ENCODE measurements at regions of chr3 and their contacts with region 1.

Region 1: DNA sequence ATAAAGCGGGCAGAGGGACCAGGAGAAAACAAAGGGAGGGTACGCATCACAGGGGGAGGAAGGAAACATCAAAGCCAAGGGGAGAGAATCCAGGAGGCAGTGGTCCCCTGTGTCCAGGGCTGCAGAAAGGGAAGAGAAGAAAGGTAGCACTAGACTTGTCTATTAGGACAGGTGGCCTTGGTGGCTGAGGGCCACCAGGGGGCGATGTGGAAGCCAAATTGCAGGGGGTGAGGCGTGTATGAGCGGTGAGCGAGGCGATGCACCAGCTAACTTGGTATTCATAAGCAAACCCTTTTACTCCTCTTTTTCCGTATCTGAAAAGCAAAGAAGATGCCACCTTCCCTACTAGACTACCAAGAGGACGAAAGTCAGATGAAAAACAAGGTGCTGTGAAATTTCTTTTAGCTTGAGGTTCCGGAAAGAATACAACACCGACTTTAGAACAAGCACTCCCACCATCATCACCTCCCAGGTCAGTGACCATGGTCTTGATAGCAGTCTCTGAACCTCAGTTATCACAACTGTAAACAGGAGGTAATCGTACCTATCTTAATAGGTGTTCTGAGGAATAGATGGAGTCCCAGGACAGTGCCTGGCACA is 654.4 kb upstream of the ADAMTS9 start:
- DNase-seq: peak; percentile 73
- H3K4me3 Mint-ChIP-seq: no peak overlapping the region
- H3K27ac Mint-ChIP-seq: no peak overlapping the region
- H3K4me1 Mint-ChIP-seq: no peaks in the 10 kb centered on the region
- H3K27me3 Mint-ChIP-seq: peaks cover 13% of the 10 kb centered on the region
- CTCF ChIP-seq: peak; percentile 68

Region 2: GRCh38 chr3:65331720-65332119 is 10.5 kb before region 1 on chr3:
- CTCF ChIA-PET with region 1: interaction called, 14 read pairs
- POLR2A ChIA-PET with region 1: no interaction called
- intact Hi-C with region 1: no loop called
- DNase-seq: no peak
- H3K4me3 Mint-ChIP-seq: no peak overlapping the region
- H3K27ac Mint-ChIP-seq: no peak overlapping the region
- H3K4me1 Mint-ChIP-seq: no peaks in the 10 kb centered on the region
- H3K27me3 Mint-ChIP-seq: peaks cover 57% of the 10 kb centered on the region
- CTCF ChIP-seq: no peak

Region 3: DNA sequence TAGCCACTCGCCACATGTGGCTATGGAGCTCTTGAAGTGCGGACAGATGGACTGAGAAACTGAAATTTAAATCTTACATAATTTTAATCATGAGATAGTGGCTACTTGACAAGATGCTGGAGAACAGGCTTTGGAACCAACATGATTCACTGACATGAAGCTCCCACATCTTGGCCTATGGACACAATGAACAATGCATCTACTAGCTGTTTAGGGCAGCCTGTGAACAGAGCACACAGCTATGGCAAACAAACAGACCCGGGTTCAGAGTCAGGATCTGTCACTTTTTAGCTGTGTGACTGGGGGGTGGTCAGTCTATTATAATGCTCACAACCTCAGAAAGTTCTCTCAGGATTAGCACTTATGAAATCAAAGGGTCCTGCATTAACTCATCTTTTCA is 80.0 kb after region 1 on chr3:
- CTCF ChIA-PET with region 1: no interaction called
- POLR2A ChIA-PET with region 1: no interaction called
- intact Hi-C with region 1: no loop called
- DNase-seq: no peak
- H3K4me3 Mint-ChIP-seq: no peak overlapping the region
- H3K27ac Mint-ChIP-seq: no peak overlapping the region
- H3K4me1 Mint-ChIP-seq: no peaks in the 10 kb centered on the region
- H3K27me3 Mint-ChIP-seq: no peaks in the 10 kb centered on the region
- CTCF ChIP-seq: no peak

Region 4: DNA sequence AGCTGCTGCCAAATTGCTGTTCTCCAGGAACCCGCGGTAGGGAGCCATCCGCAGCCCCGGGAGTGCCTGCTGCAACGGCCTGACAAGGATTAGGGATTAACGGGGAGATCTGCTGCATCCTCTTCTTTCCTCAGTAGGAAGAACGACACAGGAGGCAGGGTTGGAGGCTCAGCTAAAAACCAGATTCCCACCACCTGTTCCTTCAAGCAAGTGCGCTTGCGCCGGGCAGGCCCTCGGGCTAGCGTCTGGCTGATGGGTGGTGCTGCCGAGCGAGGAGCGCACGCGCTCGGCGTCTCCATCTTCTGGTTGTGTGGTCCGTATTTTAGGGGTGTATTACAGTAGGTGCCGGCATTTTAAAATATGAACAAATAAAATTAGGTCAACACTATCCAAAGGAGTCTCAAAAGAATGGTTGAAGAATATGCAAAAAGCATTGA is 853.2 kb after region 1 on chr3:
- CTCF ChIA-PET with region 1: interaction called, 3 read pairs
- POLR2A ChIA-PET with region 1: no interaction called
- intact Hi-C with region 1: loop called (anchors 2 kb)
- DNase-seq: no peak
- H3K4me3 Mint-ChIP-seq: no peak overlapping the region
- H3K27ac Mint-ChIP-seq: no peak overlapping the region
- H3K4me1 Mint-ChIP-seq: no peaks in the 10 kb centered on the region
- H3K27me3 Mint-ChIP-seq: no peaks in the 10 kb centered on the region
- CTCF ChIP-seq: no peak